ENCODE measurements at regions of chrX and their contacts with region 1.

Region 1: GRCh38 chrX:78139160-78140123 is at the start of gene TAF9B:
- DNase-seq: peak; percentile 89
- H3K4me3 Mint-ChIP-seq: peak within 1 kb of the TSS; percentile 89
- H3K27ac Mint-ChIP-seq: peak within 1 kb of the TSS; percentile 90
- H3K4me1 Mint-ChIP-seq: peaks cover 4% of the 10 kb centered on the region
- H3K27me3 Mint-ChIP-seq: no peaks in the 10 kb centered on the region
- total RNA-seq, gene TAF9B: 25.9 to 27.2 TPM

Region 2: GRCh38 chrX:77820091-77820727 is 319.2 kb before region 1 on chrX:
- CTCF ChIA-PET with region 1: no interaction called
- intact Hi-C with region 1: no loop called
- DNase-seq: no peak
- H3K4me3 Mint-ChIP-seq: no peak overlapping the region
- H3K27ac Mint-ChIP-seq: no peak overlapping the region
- H3K4me1 Mint-ChIP-seq: peaks cover 9% of the 10 kb centered on the region
- H3K27me3 Mint-ChIP-seq: no peaks in the 10 kb centered on the region

Region 3: DNA sequence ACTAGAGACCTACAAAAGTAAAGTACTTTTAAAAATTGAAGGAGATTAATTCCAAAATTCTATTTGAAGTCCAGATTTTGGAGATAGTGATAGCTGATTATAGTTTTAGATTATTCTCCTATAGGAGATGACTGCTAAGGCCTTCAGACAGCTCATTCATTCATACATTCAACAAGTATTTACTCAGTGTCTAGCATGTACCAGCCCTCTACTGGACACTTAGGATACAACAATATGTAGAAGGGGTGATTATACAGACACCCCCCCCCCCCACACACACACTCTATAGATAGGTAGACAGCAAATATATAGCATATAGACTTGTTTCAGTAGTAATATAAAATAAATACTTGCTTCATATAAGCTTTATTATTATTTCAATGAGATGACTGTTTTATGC is 60.4 kb after region 1 on chrX:
- CTCF ChIA-PET with region 1: no interaction called
- intact Hi-C with region 1: loop called (anchors 5 kb)
- DNase-seq: peak; percentile 4
- H3K4me3 Mint-ChIP-seq: no peak overlapping the region
- H3K27ac Mint-ChIP-seq: no peak overlapping the region
- H3K4me1 Mint-ChIP-seq: no peaks in the 10 kb centered on the region
- H3K27me3 Mint-ChIP-seq: no peaks in the 10 kb centered on the region

Region 4: DNA sequence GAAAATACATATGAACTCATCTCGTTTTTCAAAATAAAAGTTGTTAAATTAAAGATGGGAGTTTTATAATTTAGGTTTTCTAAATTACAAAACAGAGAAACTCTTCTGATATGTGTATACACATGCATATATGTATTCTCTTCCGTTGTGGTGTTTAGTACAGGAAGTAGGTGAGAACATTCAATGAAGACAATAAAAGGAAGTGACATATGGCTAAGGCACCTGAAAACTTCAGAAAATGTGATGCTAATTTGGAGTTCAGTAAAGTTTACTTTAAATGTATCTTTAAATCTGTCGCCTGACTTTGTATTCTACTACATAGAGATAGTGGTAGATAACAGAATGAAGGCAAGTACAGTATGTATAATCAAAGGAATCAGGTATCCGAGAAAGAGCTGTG is 1261.2 kb after region 1 on chrX:
- CTCF ChIA-PET with region 1: no interaction called
- intact Hi-C with region 1: loop called (anchors 10 kb)
- DNase-seq: no peak
- H3K4me3 Mint-ChIP-seq: no peak overlapping the region
- H3K27ac Mint-ChIP-seq: no peak overlapping the region
- H3K4me1 Mint-ChIP-seq: peaks cover 19% of the 10 kb centered on the region
- H3K27me3 Mint-ChIP-seq: no peaks in the 10 kb centered on the region